AG04449 (cell line): ENCODE measurements at regions of chr22 and their contacts with region 1.

Region 1: GRCh38 chr22:29154364-29155048 is 51.2 kb upstream of the EMID1 start:
- DNase-seq: no peak
- H3K4me3 ChIP-seq: no peak overlapping the region
- CTCF ChIP-seq: peak; percentile 98

Region 2: GRCh38 chr22:28670161-28670560 is 484.3 kb before region 1 on chr22:
- CTCF ChIA-PET with region 1: no interaction called
- POLR2A ChIA-PET with region 1: no interaction called
- DNase-seq: peak; percentile 63
- H3K4me3 ChIP-seq: no peak overlapping the region
- CTCF ChIP-seq: no peak

Region 3: GRCh38 chr22:28855355-28856094 is 299.0 kb before region 1 on chr22:
- CTCF ChIA-PET with region 1: interaction called, 23 read pairs
- POLR2A ChIA-PET with region 1: no interaction called
- DNase-seq: peak; percentile 14
- H3K4me3 ChIP-seq: no peak overlapping the region
- CTCF ChIP-seq: peak; percentile 82

Region 4: GRCh38 chr22:29090039-29090438 is 64.5 kb before region 1 on chr22:
- CTCF ChIA-PET with region 1: interaction called, 10 read pairs
- POLR2A ChIA-PET with region 1: no interaction called
- DNase-seq: no peak
- H3K4me3 ChIP-seq: no peak overlapping the region
- CTCF ChIP-seq: no peak

Region 5: GRCh38 chr22:29136782-29137700 is 17.5 kb before region 1 on chr22:
- CTCF ChIA-PET with region 1: interaction called, 69 read pairs
- POLR2A ChIA-PET with region 1: no interaction called
- DNase-seq: no peak
- H3K4me3 ChIP-seq: no peak overlapping the region
- CTCF ChIP-seq: no peak

Region 6: GRCh38 chr22:29165321-29166060 is 11.0 kb after region 1 on chr22:
- CTCF ChIA-PET with region 1: interaction called, 22 read pairs
- POLR2A ChIA-PET with region 1: no interaction called
- DNase-seq: no peak
- H3K4me3 ChIP-seq: no peak overlapping the region
- CTCF ChIP-seq: no peak

Region 7: GRCh38 chr22:29202212-29203192 is 48.0 kb after region 1 on chr22:
- CTCF ChIA-PET with region 1: interaction called, 11 read pairs
- POLR2A ChIA-PET with region 1: no interaction called
- DNase-seq: no peak
- H3K4me3 ChIP-seq: no peak overlapping the region
- CTCF ChIP-seq: peak; percentile 41

Region 8: DNA sequence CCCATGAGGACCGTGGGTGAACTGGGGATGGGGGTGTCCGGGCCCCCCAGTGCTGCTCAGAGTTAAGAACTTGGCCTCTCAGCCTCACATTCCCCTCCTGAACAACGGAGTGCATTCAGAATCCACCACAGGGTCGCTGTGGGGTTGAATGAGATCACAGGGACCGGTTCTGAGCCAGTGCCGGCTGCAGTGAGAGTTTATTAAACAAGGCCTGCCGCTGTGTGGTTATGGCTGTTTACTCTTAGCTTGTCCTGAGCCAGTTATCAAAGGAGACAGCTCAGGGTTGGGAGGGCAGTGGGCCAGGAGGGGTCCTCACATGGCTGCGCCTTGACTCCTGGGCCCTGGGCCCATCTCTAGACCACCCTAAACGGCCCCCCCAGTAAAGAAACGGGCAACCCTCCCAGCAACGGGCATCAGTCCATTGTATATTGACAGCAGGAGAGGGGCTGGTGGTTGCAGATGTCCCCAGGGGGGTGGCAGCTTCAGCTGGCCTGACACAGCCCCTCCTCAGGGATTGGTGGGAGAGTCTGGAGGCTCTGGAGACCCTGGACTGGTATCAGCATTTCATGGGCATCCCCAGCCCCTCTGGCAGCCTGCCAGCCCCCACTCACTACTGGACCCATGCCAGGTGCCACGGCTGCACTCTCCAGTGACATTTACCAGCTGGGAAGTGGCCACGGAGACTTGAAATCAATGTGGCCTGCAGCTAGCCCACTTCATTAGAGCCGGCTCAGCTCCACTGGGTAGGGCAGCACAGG is 550.2 kb after region 1 on chr22:
- CTCF ChIA-PET with region 1: no interaction called
- POLR2A ChIA-PET with region 1: no interaction called
- DNase-seq: no peak
- H3K4me3 ChIP-seq: no peak overlapping the region
- CTCF ChIP-seq: no peak